ENCODE measurements at regions of chr3 and their contacts with region 1.

Region 1: DNA sequence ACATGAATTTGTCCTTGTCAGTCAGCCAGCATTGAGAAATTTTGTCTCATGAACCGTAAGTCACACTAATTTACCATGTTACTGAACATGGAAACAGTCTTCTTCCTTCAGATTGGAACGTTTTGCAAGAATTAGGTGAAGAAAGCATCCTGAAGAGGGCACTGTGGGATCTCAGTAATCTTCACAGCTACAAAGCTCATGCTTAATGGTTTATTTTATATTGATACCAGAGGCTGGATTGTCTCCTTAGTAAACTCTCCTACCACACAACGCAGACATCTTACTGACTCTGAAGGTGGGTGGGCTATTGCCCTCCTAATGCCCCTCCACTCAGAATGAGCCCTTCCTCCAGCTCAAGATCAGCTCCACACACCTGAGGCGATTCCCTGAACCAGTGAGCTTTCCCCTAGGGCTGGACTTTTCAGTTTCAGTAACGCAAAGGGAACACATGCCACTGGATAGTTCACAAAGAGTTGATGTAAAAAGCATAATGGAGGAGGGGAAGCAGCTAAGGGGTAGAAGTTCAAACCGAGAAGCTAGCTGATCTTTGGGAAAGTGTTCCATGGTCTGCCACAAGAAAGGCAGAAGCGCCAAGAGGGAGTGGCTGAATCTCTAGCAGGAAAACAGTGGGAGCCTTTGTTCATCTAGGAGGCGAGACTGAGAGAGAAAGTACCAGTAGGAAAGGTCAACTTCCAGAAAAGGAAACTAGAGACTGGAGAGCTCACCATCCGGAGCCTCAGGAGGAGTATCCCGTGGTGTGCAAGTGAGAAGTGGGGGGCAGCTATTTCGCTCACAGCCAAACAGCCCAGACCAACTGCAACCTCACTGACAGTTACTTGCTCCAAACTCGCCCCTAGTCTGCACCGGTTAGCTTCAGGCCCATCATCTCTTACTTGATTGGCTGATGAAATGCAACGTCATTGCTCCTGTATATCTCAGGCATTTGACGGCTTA is at the start of gene SLC9C1:
- DNase-seq: peak; percentile 74
- ATAC-seq: peak; percentile 85
- H3K4me3 ChIP-seq: peak within 1 kb of the TSS; percentile 36
- H3K27ac ChIP-seq: peak within 1 kb of the TSS; percentile 35; the same call in 1 of the 2 replicates
- H3K4me1 ChIP-seq: no peaks in the 10 kb centered on the region
- H3K27me3 ChIP-seq: no peaks in the 10 kb centered on the region
- CTCF ChIP-seq: peak; percentile 83
- POLR2A ChIP-seq: no peak
- RAD21 ChIP-seq: peak; percentile 77
- total RNA-seq, gene SLC9C1: not detected in 2 replicates

Region 2: DNA sequence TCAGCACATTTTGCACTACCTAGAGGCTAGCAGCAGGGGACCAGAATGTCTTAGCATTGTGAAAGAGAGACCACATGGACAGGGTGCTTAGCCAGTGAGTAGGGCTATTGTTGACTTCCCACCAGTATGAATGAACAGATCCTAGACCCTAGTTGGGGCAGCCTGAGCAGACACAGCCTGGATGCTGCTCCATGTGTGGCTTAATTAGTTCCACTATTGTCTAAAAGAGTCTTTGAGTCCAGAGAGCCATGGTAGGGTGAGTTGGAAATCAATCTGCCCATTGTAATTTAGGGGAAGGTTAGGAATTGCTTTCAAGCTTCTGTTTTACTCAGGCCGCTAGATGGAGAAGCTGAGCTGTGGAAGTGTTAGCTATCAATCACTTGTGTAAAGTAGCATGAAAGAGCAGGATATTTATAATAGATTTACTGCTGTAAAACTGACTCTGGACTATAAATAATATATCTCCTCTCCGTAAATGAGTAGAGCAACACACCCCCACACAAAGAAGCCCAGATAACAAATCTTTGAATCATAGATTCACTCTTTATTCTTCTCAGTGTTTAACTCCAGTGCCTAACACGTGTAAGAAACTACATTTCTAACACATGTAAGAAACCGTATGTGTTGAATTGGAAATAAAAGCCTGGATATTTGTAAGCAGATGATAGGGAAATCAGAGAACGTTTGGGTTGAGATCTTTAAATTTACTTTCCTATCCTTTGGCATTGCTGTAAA is 156.5 kb before region 1 on chr3:
- CTCF ChIA-PET with region 1: interaction called, 3 read pairs
- POLR2A ChIA-PET with region 1: no interaction called
- dilution Hi-C with region 1: no loop called
- in situ Hi-C with region 1: no loop called
- intact Hi-C with region 1: loop called (anchors 5 kb)
- DNase-seq: peak; percentile 34
- ATAC-seq: peak; percentile 74
- H3K4me3 ChIP-seq: no peak overlapping the region
- H3K27ac ChIP-seq: no peak overlapping the region
- H3K4me1 ChIP-seq: no peaks in the 10 kb centered on the region
- H3K27me3 ChIP-seq: no peaks in the 10 kb centered on the region
- CTCF ChIP-seq: peak; percentile 53
- POLR2A ChIP-seq: no peak
- RAD21 ChIP-seq: peak; percentile 52

Region 3: GRCh38 chr3:112437146-112438022 is 143.7 kb after region 1 on chr3:
- CTCF ChIA-PET with region 1: no interaction called
- POLR2A ChIA-PET with region 1: no interaction called
- dilution Hi-C with region 1: no loop called
- in situ Hi-C with region 1: no loop called
- intact Hi-C with region 1: loop called (anchors 1 kb)
- DNase-seq: peak; percentile 58
- ATAC-seq: peak; percentile 67
- H3K4me3 ChIP-seq: no peak overlapping the region
- H3K27ac ChIP-seq: no peak overlapping the region
- H3K4me1 ChIP-seq: no peaks in the 10 kb centered on the region
- H3K27me3 ChIP-seq: no peaks in the 10 kb centered on the region; the same call in 1 of the 2 replicates
- CTCF ChIP-seq: peak; percentile 56
- POLR2A ChIP-seq: no peak
- RAD21 ChIP-seq: peak; percentile 71

Region 4: DNA sequence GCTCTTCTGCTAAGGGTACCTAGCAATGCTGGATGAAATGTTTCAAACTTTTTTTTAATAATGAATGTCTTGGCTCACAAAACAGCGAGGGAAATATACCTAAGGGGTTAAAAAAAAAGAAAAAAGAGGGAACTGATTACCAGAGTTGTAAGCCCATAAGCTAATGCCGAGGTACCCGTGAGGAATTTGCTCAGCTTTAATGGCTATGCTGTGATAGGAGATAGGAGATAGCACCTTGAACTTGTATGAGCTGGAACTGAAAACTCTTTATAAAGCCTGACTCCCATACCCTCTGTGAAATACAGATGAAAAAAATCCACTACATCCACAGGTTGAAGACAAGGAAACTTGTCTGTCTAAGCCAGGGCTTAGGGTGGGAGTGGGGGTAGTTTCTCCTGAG is 1558.9 kb after region 1 on chr3:
- CTCF ChIA-PET with region 1: no interaction called
- POLR2A ChIA-PET with region 1: no interaction called
- dilution Hi-C with region 1: no loop called
- in situ Hi-C with region 1: no loop called
- intact Hi-C with region 1: loop called (anchors 5 kb)
- DNase-seq: no peak
- ATAC-seq: no peak
- H3K4me3 ChIP-seq: no peak overlapping the region
- H3K27ac ChIP-seq: no peak overlapping the region
- H3K4me1 ChIP-seq: peaks cover 4% of the 10 kb centered on the region; the same call in 1 of the 2 replicates
- H3K27me3 ChIP-seq: no peaks in the 10 kb centered on the region
- CTCF ChIP-seq: no peak
- POLR2A ChIP-seq: no peak
- RAD21 ChIP-seq: no peak